ENCODE measurements at regions of chr16 and their contacts with region 1.

Region 1: DNA sequence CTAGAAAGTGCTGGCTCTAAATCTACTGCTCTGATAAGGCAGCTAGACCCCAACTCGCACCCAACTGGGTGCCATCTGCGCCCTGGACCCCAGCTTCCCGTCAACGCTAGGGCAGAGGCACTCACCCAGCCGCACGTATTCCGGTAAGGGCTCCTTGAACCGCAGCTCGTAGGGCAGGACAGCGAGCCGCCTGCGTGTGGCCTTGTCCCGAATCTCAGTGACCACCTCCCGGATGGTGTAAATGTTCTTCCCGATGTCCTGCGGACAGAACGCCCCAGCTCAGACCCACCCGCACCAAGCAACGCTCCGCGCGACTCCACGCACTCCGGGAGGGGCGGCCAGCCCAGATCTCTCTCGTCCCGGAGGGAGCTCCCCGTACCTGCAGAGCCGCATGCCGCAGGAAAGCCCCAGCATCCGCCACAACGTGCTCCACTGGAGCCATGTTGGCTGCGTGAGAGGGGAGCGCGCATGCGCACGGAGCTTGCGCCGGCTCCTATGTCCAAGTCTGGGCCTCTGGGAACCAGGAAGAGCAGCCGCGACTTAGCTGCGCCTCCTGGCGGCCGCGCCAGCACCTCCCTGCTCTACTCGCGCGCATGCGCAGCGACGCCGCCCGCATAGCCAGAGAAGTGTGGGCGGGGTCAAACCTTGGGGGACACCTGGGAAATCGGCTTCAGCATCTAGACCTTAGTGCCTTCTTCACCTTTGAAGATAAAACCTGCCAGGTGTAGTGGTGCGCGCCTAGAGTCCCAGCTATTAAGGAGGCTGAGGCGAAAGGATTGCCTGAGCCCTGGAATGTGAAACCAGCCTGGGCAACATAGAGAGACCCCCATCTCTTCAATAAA is at the start of gene NOB1:
- DNase-seq: peak; percentile 98
- ATAC-seq: peak; percentile 99
- total RNA-seq, gene NOB1: 15.6 TPM

Region 2: GRCh38 chr16:69396187-69397061 is 358.3 kb before region 1 on chr16:
- intact Hi-C with region 1: loop called (anchors 10 kb)
- DNase-seq: no peak
- ATAC-seq: peak; percentile 74

Region 3: GRCh38 chr16:69577446-69577845 is 177.2 kb before region 1 on chr16:
- intact Hi-C with region 1: no loop called
- DNase-seq: no peak
- ATAC-seq: no peak

Region 4: GRCh38 chr16:69709456-69710084 is 45.1 kb before region 1 on chr16:
- intact Hi-C with region 1: loop called (anchors 2 kb)
- DNase-seq: no peak
- ATAC-seq: peak; percentile 73

Region 5: DNA sequence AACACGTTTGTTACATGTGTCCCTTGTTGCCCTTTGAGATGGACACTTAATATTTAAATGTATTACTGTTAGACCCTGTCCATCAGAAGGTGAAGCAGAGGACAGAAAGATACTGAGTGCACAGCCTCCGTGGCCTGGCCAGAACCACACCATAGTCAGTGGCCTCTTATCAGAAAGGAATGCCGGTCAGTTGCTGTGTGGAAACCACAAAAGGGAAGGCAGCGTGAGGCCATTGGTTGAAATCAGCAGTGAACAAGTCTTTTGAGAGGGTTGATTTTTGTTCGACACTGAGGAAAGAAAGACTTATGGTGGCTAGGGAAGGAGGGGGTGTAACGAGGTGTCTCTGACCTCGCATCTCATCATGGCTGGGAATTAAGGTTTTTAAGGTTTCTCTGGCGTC is 111.0 kb after region 1 on chr16:
- intact Hi-C with region 1: no loop called
- DNase-seq: peak; percentile 50
- ATAC-seq: peak; percentile 58